Activated T-helper 1 cell treated with anti-CD3 and anti-CD28 coated beads, Interleukin-12 subunit alpha, Interleukin-12 subunit beta, Interleukin-2, Interleukin-4 antibody, amounts not matched to agents 30 ng/mL and 10 ng/mL and 1 ng/mL, durations not matched to agents 14 hours and 24 hours and 36 hours (primary cell): ENCODE measurements at regions of chr5 and their contacts with region 1.

Region 1: DNA sequence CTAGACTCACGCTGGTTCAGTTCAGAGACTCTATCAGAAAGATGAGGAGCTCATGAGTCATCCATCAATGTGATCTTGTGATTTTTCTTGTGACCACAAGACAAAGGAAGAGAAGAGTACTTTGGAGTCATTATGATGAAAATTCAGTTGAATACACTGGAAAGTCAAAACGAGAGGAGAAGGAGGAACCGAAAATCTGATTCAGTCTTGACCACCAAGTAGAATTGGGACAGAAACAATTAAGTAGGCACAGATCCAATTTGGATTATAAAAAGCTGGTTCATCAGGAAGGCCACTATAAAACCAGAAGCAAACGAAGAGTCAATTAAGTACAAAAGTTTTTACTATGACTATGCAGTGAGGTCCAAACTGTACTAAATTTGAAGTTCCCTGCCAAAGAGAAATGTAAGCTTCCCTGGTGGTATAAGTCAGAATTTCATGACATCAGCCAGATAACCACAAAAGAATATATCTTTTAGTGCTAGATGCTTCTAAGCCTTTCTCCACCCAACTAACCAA is 90.9 kb downstream of the THBS4 start:
- DNase-seq: no peak
- H3K4me3 Mint-ChIP-seq: peak overlapping the region; percentile 48
- H3K27ac Mint-ChIP-seq: peak overlapping the region; percentile 70
- H3K4me1 Mint-ChIP-seq: peaks cover 23% of the 10 kb centered on the region
- H3K27me3 Mint-ChIP-seq: no peaks in the 10 kb centered on the region

Region 2: GRCh38 chr5:78920604-78921003 is 1205.4 kb before region 1 on chr5:
- intact Hi-C with region 1: no loop called
- DNase-seq: no peak
- H3K4me3 Mint-ChIP-seq: no peak overlapping the region
- H3K27ac Mint-ChIP-seq: no peak overlapping the region
- H3K4me1 Mint-ChIP-seq: no peaks in the 10 kb centered on the region
- H3K27me3 Mint-ChIP-seq: no peaks in the 10 kb centered on the region

Region 3: DNA sequence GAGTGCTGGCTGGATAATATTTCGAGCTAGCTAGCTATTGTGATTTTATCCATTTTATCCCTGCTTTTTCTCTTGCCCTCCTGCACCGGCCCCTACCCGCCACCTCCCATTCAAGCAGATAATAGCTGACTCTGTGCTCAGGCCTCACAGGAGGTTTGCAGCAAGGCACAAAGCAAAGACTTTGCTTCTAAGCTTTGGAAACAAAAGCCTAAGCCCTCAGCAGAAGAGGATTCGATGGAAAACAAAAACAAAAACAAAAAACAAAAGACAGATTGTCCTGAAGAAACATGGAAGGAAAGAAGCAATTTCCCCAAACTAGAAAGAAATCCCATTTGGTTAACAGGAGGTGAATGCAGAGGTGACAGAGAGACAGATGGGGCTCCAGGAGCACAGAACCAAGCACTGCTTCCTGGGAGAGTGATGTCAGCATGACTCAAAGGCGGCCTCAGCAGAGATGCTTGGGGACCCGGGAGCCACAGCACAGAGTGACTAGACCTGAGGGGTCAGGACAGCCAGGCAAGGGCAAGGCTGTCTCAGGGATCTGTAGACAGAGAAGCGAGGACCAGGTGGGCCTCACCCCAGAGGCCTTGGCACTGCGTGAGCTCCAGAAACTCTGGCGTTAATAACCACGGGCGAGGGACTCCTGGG is 163.3 kb before region 1 on chr5:
- intact Hi-C with region 1: loop called (anchors 1 kb)
- DNase-seq: peak; percentile 29
- H3K4me3 Mint-ChIP-seq: peak overlapping the region; percentile 35
- H3K27ac Mint-ChIP-seq: peak overlapping the region; percentile 85
- H3K4me1 Mint-ChIP-seq: peaks cover 39% of the 10 kb centered on the region
- H3K27me3 Mint-ChIP-seq: no peaks in the 10 kb centered on the region

Region 4: DNA sequence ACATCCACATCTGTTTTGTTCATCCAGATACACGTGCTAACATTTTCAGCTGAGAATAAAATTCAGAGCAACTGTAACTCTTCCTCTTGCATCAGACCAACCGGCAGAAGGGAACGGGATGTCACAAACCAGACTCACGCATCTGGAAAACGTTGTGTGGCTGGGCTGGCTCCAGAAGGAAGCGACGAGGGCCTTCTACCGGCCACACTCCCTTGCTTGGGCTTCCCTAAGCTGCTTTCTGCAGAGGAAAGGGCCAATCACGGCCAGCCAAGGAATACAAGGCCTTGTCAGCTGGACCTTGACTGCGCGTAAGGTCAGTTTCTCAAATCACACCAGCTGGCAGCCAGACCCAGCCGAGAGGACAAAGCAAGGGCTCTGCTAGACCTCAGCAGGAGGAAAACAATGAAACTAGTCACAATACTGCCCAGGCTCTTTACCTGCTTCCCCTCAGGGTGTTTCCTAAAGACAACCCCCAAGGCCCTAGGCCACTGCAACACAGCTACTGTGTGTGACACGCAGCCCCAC is 15.2 kb after region 1 on chr5:
- intact Hi-C with region 1: loop called (anchors 1 kb)
- DNase-seq: no peak
- H3K4me3 Mint-ChIP-seq: no peak overlapping the region
- H3K27ac Mint-ChIP-seq: peak overlapping the region; percentile 77
- H3K4me1 Mint-ChIP-seq: peaks cover 64% of the 10 kb centered on the region
- H3K27me3 Mint-ChIP-seq: no peaks in the 10 kb centered on the region

Region 5: GRCh38 chr5:80191991-80192398 is 66.0 kb after region 1 on chr5:
- intact Hi-C with region 1: loop called (anchors 1 kb)
- DNase-seq: peak; percentile 47
- H3K4me3 Mint-ChIP-seq: peak overlapping the region; percentile 62
- H3K27ac Mint-ChIP-seq: peak overlapping the region; percentile 86
- H3K4me1 Mint-ChIP-seq: peaks cover 86% of the 10 kb centered on the region
- H3K27me3 Mint-ChIP-seq: no peaks in the 10 kb centered on the region

Region 6: DNA sequence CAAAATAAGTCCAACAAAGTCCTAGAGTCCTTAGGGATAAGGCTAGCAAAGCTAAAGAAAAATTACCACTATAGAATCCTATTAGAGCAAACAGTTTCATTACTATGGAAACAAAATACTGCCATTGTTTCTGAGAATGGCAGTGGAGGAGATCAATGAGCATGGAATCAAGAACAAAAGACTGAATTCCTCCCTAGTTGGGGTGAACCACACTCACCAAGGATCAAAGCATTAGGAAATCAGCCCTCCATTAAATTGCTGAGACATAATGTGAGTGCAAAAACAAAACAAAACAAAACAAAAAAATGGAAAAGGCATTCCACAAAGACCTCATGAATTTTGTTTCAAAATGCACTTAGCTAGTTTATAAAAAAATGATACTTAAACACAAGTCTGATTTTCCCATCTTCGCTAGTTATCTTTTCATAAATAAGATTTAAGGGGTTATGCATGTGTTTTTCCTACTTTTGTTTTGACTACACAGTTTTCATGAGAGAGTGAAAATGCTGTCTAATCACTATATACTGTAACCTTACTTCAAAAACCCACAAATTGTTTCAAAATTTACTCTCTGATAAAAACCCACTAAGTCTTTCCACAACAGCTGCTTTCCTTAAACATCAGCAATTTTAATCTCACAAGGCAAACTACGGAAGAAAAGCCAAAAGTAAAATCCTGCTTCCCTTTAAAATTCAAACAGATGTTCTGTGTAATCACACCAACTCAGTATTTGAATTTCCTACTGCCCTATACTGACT is 120.2 kb after region 1 on chr5:
- intact Hi-C with region 1: loop called (anchors 1 kb)
- DNase-seq: no peak
- H3K4me3 Mint-ChIP-seq: peak overlapping the region; percentile 23
- H3K27ac Mint-ChIP-seq: peak overlapping the region; percentile 87
- H3K4me1 Mint-ChIP-seq: peaks cover 43% of the 10 kb centered on the region
- H3K27me3 Mint-ChIP-seq: no peaks in the 10 kb centered on the region

Region 7: GRCh38 chr5:80591352-80591751 is 465.3 kb after region 1 on chr5:
- intact Hi-C with region 1: no loop called
- DNase-seq: no peak
- H3K4me3 Mint-ChIP-seq: no peak overlapping the region
- H3K27ac Mint-ChIP-seq: no peak overlapping the region
- H3K4me1 Mint-ChIP-seq: no peaks in the 10 kb centered on the region
- H3K27me3 Mint-ChIP-seq: peaks cover under 1% of the 10 kb centered on the region

Region 8: GRCh38 chr5:80754900-80755299 is 628.9 kb after region 1 on chr5:
- intact Hi-C with region 1: loop called (anchors 1 kb)
- DNase-seq: peak; percentile 16
- H3K4me3 Mint-ChIP-seq: peak overlapping the region; percentile 68
- H3K27ac Mint-ChIP-seq: peak overlapping the region; percentile 97
- H3K4me1 Mint-ChIP-seq: peaks cover 58% of the 10 kb centered on the region
- H3K27me3 Mint-ChIP-seq: no peaks in the 10 kb centered on the region